Activated CD4-positive, alpha-beta T cell treated with anti-CD3 and anti-CD28 coated beads for 36 hours (primary cell): ENCODE measurements at regions of chr19 and their contacts with region 1.

Region 1: DNA sequence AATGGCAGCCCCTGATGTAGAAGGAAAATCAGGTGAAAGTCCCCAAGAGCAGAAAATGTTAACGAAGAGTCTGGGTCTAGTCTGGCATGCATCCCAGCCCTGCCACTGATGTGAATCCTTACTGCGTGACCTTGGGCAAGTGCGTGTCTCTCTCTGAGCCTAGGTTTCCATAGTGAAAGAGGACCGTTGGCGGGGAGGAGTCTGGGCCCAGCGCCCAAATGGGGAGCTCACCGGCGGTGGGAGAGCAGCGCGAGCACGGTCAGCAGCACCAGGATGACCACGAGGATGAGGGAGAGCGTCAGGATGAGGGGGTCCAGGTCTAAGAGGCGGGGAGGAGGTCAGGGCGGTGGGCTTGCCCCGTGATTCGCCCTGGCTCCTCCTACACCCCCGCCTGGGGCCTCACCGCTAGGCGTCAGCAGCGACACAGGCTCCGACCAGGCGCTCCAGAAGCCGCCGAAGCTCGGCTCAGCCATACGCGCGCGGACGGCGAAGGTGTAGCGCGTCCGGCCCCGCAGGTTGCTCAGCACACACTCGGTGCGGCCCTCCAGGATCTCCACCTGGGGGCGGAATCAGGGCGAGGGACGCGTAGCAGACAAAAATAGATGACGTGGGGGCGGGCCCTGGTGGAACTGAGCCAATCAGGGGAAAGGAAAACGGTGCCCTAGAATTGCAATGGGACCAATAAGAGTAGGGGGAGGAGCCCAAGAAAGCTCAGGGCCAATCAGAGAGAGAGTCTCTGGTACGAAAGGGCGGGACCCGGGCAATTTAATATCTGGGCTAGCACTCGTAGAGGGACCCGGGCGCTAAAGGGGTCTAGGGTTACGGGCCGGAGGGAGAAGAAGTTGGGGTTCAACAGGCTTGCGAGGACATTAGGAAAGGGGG is 3.2 kb downstream of the EPOR start:
- DNase-seq: peak; percentile 97
- ATAC-seq: peak; percentile 86
- H3K4me3 Mint-ChIP-seq: peak overlapping the region; percentile 75
- H3K27ac Mint-ChIP-seq: peak overlapping the region; percentile 93
- H3K4me1 Mint-ChIP-seq: peaks cover 46% of the 10 kb centered on the region
- H3K27me3 Mint-ChIP-seq: peaks cover 14% of the 10 kb centered on the region

Region 2: GRCh38 chr19:10870955-10871603 is 509.8 kb before region 1 on chr19 and contains the start of gene CARM1:
- CTCF ChIA-PET with region 1: interaction called, 3 read pairs
- POLR2A ChIA-PET with region 1: no interaction called
- intact Hi-C with region 1: loop called in 1 of 2 experiments (anchors 1 kb)
- DNase-seq: peak; percentile 100
- ATAC-seq: peak; percentile 88
- H3K4me3 Mint-ChIP-seq: peak within 1 kb of the TSS; percentile 80
- H3K27ac Mint-ChIP-seq: peak within 1 kb of the TSS; percentile 97
- H3K4me1 Mint-ChIP-seq: peaks cover 28% of the 10 kb centered on the region
- H3K27me3 Mint-ChIP-seq: no peaks in the 10 kb centered on the region
- total RNA-seq, gene CARM1: 82.3 to 96.8 TPM

Region 3: GRCh38 chr19:11346092-11346940 is 34.6 kb before region 1 on chr19 and contains the starts of genes CCDC159 and TMEM205:
- CTCF ChIA-PET with region 1: interaction called, 11 read pairs
- POLR2A ChIA-PET with region 1: interaction called, 6 read pairs
- intact Hi-C with region 1: loop called in 1 of 2 experiments (anchors 1 kb)
- DNase-seq: peak; percentile 99
- ATAC-seq: peak; percentile 99
- H3K4me3 Mint-ChIP-seq: peak within 1 kb of the TSS; percentile 83
- H3K27ac Mint-ChIP-seq: peak within 1 kb of the TSS; percentile 82
- H3K4me1 Mint-ChIP-seq: peaks cover 23% of the 10 kb centered on the region
- H3K27me3 Mint-ChIP-seq: no peaks in the 10 kb centered on the region
- total RNA-seq, gene CCDC159: 15.3 to 18.0 TPM
- total RNA-seq, gene TMEM205: 28.0 to 32.6 TPM

Region 4: GRCh38 chr19:11367528-11367927 is 13.4 kb before region 1 on chr19:
- CTCF ChIA-PET with region 1: interaction called, 13 read pairs
- POLR2A ChIA-PET with region 1: no interaction called
- intact Hi-C with region 1: no loop called
- DNase-seq: no peak
- ATAC-seq: no peak
- H3K4me3 Mint-ChIP-seq: no peak overlapping the region
- H3K27ac Mint-ChIP-seq: no peak overlapping the region
- H3K4me1 Mint-ChIP-seq: no peaks in the 10 kb centered on the region
- H3K27me3 Mint-ChIP-seq: no peaks in the 10 kb centered on the region

Region 5: GRCh38 chr19:11405846-11406643 is 25.2 kb after region 1 on chr19:
- CTCF ChIA-PET with region 1: interaction called, 8 read pairs
- POLR2A ChIA-PET with region 1: interaction called, 5 read pairs
- intact Hi-C with region 1: loop called in 1 of 2 experiments (anchors 1 kb)
- DNase-seq: peak; percentile 81
- ATAC-seq: peak; percentile 88
- H3K4me3 Mint-ChIP-seq: no peak overlapping the region
- H3K27ac Mint-ChIP-seq: no peak overlapping the region
- H3K4me1 Mint-ChIP-seq: peaks cover 4% of the 10 kb centered on the region
- H3K27me3 Mint-ChIP-seq: peaks cover 6% of the 10 kb centered on the region

Region 6: GRCh38 chr19:11482384-11483050 is 101.6 kb after region 1 on chr19:
- CTCF ChIA-PET with region 1: interaction called, 11 read pairs
- POLR2A ChIA-PET with region 1: no interaction called
- intact Hi-C with region 1: loop called (anchors 1 to 2 kb)
- DNase-seq: peak; percentile 93
- ATAC-seq: peak; percentile 64
- H3K4me3 Mint-ChIP-seq: peak overlapping the region; percentile 66
- H3K27ac Mint-ChIP-seq: peak overlapping the region; percentile 78
- H3K4me1 Mint-ChIP-seq: peaks cover 17% of the 10 kb centered on the region
- H3K27me3 Mint-ChIP-seq: peaks cover 20% of the 10 kb centered on the region

Region 7: GRCh38 chr19:11639602-11640471 is 258.9 kb after region 1 on chr19:
- CTCF ChIA-PET with region 1: no interaction called
- POLR2A ChIA-PET with region 1: no interaction called
- intact Hi-C with region 1: loop called in 1 of 2 experiments (anchors 5 kb)
- DNase-seq: peak; percentile 98
- ATAC-seq: peak; percentile 100
- H3K4me3 Mint-ChIP-seq: peak overlapping the region; percentile 76
- H3K27ac Mint-ChIP-seq: no peak overlapping the region
- H3K4me1 Mint-ChIP-seq: no peaks in the 10 kb centered on the region
- H3K27me3 Mint-ChIP-seq: peaks cover 10% of the 10 kb centered on the region